ENCODE measurements at regions of chr6 and their contacts with region 1.

Region 1: GRCh38 chr6:42984001-42984923 is at the start of gene PPP2R5D:
- DNase-seq: peak; percentile 100
- ATAC-seq: peak; percentile 95
- H3K4me3 ChIP-seq: peak within 1 kb of the TSS; percentile 88 to 99 (median 92)
- H3K27ac ChIP-seq: peak within 1 kb of the TSS; percentile 75
- H3K4me1 ChIP-seq: peaks cover 52% of the 10 kb centered on the region
- H3K27me3 ChIP-seq: no peaks in the 10 kb centered on the region; a peak in 1 of 5 replicates
- CTCF ChIP-seq: no peak
- EP300 ChIP-seq: no peak
- POLR2A ChIP-seq: peak; percentile 93 to 99
- RAD21 ChIP-seq: peak; percentile 29; the same call in 1 of the 2 replicates
- total RNA-seq, gene PPP2R5D: 55.6 and 60.4 TPM in 2 replicates

Region 2: GRCh38 chr6:42901536-42901957 is 82.7 kb before region 1 on chr6:
- CTCF ChIA-PET with region 1: no interaction called
- POLR2A ChIA-PET with region 1: interaction called, 11 read pairs
- in situ Hi-C with region 1: no loop called
- intact Hi-C with region 1: loop called (anchors 2 kb)
- DNase-seq: peak; percentile 92
- ATAC-seq: peak; percentile 94
- H3K4me3 ChIP-seq: peak overlapping the region; percentile 48 to 71 (median 63)
- H3K27ac ChIP-seq: no peak overlapping the region
- H3K4me1 ChIP-seq: peaks cover 38% of the 10 kb centered on the region
- H3K27me3 ChIP-seq: no peaks in the 10 kb centered on the region
- CTCF ChIP-seq: peak; percentile 98
- EP300 ChIP-seq: 0 out of 4 replicates have a peak, but pooled peaks of 1 of the 2 experiments have one; percentile 16
- POLR2A ChIP-seq: no peak
- RAD21 ChIP-seq: peak; percentile 96

Region 3: DNA sequence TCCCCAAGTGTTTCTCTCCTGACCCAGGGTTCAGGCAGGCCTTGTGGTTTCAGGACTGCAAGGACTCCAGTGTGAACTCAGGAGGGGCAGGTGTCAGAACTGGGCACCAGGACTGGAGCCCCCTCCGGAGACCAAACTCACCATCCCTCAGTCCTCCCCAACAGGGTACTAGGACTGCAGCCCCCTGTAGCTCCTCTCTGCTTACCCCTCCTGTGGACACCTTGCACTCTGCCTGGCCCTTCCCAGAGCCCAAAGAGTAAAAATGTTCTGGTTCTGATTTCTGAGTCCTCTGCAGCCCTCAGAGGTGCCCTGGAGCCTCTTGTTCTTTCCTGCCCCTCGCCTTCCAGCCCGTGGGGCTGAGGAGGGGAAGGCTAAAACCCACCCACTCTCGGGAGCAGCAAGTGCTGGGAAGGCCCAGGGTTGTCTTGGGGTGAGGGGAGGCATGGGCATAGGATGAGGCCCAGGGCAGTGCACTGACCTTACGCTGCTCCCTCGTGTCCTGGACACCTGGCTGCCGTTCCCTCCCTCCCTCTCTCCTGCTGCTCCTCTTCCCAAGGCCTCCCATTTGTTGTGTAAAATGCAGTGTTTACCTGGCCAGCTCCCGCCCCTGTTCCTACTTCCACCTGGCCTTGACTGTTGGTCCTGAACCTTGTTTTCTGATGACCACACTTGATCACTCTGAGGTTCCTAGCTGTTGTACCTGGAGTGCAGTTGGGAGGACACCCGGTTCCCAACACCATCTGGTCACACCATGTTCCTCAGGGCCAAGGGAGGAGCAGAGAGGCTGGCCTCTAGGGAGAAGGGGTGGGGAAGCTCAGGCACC is 45.1 kb before region 1 on chr6:
- CTCF ChIA-PET with region 1: no interaction called
- POLR2A ChIA-PET with region 1: interaction called, 17 read pairs
- in situ Hi-C with region 1: no loop called
- intact Hi-C with region 1: no loop called
- DNase-seq: peak; percentile 86
- ATAC-seq: peak; percentile 87
- H3K4me3 ChIP-seq: peak overlapping the region in 1 of 3 experiments; percentile 20; a peak in 1 of 6 replicates
- H3K27ac ChIP-seq: peak overlapping the region; percentile 81
- H3K4me1 ChIP-seq: peaks cover 64% of the 10 kb centered on the region
- H3K27me3 ChIP-seq: no peaks in the 10 kb centered on the region
- CTCF ChIP-seq: peak; percentile 30; the same call in 1 of the 2 replicates
- EP300 ChIP-seq: peak; percentile 28 to 89; a peak in 3 of 4 replicates
- POLR2A ChIP-seq: no peak; a peak in 1 of 4 replicates
- RAD21 ChIP-seq: peak; percentile 44; the same call in 1 of the 2 replicates

Region 4: GRCh38 chr6:42970871-42971612 is 13.2 kb before region 1 on chr6:
- CTCF ChIA-PET with region 1: no interaction called
- POLR2A ChIA-PET with region 1: interaction called, 38 read pairs
- in situ Hi-C with region 1: no loop called
- intact Hi-C with region 1: no loop called
- DNase-seq: peak; percentile 32
- ATAC-seq: peak; percentile 39
- H3K4me3 ChIP-seq: no peak overlapping the region
- H3K27ac ChIP-seq: peak overlapping the region; percentile 30
- H3K4me1 ChIP-seq: peaks cover 39% of the 10 kb centered on the region
- H3K27me3 ChIP-seq: no peaks in the 10 kb centered on the region
- CTCF ChIP-seq: no peak
- EP300 ChIP-seq: no peak
- POLR2A ChIP-seq: no peak
- RAD21 ChIP-seq: no peak

Region 5: DNA sequence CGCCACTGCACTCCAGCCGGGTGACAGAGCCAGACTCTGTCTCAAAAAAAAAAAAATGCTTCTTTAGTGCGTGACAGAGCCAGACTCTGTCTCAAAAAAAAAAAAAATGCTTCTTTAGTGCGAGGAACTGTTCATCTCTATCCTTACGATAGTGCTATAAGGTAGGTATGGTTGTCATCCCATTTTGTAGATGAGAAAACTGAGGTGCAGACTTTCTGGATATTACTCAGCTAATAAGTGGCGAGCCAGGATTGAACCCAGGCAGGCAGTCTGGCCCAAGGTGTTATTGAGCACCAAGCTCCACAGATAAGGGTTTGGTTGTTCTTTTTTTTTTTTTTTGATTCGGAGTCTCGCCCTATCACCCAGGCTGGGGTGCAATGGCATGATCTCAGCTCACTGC is 17.6 kb after region 1 on chr6:
- CTCF ChIA-PET with region 1: no interaction called
- POLR2A ChIA-PET with region 1: interaction called, 23 read pairs
- in situ Hi-C with region 1: no loop called
- intact Hi-C with region 1: no loop called
- DNase-seq: no peak
- ATAC-seq: no peak
- H3K4me3 ChIP-seq: no peak overlapping the region
- H3K27ac ChIP-seq: no peak overlapping the region
- H3K4me1 ChIP-seq: no peaks in the 10 kb centered on the region
- H3K27me3 ChIP-seq: no peaks in the 10 kb centered on the region
- CTCF ChIP-seq: no peak
- EP300 ChIP-seq: no peak
- POLR2A ChIP-seq: no peak
- RAD21 ChIP-seq: no peak

Region 6: DNA sequence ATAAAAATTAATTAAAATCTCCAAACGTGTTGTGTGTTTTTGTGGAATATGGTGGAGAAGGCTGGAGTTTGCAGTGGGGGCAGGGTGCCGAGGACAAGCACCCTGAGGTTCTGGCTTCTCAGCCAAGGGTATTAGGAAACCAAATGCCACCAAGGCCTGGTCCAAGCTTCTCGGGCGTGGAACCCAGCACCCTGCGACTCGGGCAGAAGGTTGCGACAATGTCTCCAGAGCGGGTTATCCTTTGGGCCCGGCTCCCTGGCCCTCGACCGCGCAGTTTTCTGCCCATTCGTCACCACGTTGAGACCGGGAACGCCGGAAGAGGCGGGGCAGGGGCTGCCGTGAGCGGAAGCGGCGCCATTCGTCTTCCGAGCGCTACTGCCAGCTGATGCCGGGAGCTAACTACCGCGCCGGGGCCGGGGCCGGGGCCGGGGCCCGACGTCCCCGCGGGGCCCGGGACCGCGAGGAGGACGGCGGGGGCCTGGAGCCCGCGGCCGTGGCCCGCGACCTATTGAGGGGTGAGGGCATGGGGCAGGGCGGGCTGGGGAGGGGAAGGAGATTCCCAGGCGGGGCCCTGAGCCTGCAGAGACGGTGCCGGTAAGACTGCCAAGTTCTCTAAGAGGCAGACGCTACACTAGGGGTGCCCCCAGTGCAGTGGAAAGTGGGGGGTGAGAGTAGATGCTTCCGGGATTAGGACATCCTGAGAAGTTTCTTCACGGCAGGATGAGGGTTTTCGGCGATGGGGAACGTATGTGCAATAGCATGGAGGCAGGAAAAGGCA is 37.2 kb after region 1 on chr6 and contains the start of gene RRP36:
- CTCF ChIA-PET with region 1: no interaction called
- POLR2A ChIA-PET with region 1: interaction called, 33 read pairs
- in situ Hi-C with region 1: no loop called
- intact Hi-C with region 1: no loop called
- DNase-seq: peak; percentile 74
- ATAC-seq: peak; percentile 96
- H3K4me3 ChIP-seq: peak within 1 kb of the TSS; percentile 100
- H3K27ac ChIP-seq: peak within 1 kb of the TSS; percentile 77
- H3K4me1 ChIP-seq: peaks cover 30% of the 10 kb centered on the region
- H3K27me3 ChIP-seq: peaks cover 0 to 3% of the 10 kb centered on the region in 2 experiments; a peak in 1 of 5 replicates
- CTCF ChIP-seq: 0 out of 2 replicates have a peak, but pooled peaks have one; percentile 10
- EP300 ChIP-seq: no peak
- POLR2A ChIP-seq: peak; percentile 83 to 87
- RAD21 ChIP-seq: peak; percentile 48; the same call in 1 of the 2 replicates
- total RNA-seq, gene RRP36: 144 and 184 TPM in 2 replicates